A549 (cell line): ENCODE measurements at regions of chr17 and their contacts with region 1.

Region 1: GRCh38 chr17:75228305-75228704 is 22.8 kb downstream of the NUP85 start:
- DNase-seq: no peak
- ATAC-seq: no peak
- H3K4me3 ChIP-seq: no peak overlapping the region
- H3K27ac ChIP-seq: no peak overlapping the region
- H3K4me1 ChIP-seq: no peaks in the 10 kb centered on the region
- CTCF ChIP-seq: no peak
- EP300 ChIP-seq: no peak
- POLR2A ChIP-seq: no peak
- RAD21 ChIP-seq: no peak

Region 2: GRCh38 chr17:75181110-75181509 is 47.2 kb before region 1 on chr17:
- CTCF ChIA-PET with region 1: no interaction called
- POLR2A ChIA-PET with region 1: no interaction called
- DNase-seq: no peak
- ATAC-seq: no peak
- H3K4me3 ChIP-seq: peak overlapping the region; percentile 96
- H3K27ac ChIP-seq: peak overlapping the region; percentile 93 to 98; a peak in 3 of 6 replicates
- H3K4me1 ChIP-seq: peaks cover 15% of the 10 kb centered on the region; the same call in 2 of the 3 replicates
- CTCF ChIP-seq: no peak
- EP300 ChIP-seq: no peak
- POLR2A ChIP-seq: no peak
- RAD21 ChIP-seq: no peak

Region 3: GRCh38 chr17:75218131-75218530 is 10.2 kb before region 1 on chr17:
- CTCF ChIA-PET with region 1: interaction called, 19 read pairs
- POLR2A ChIA-PET with region 1: interaction called, 3 read pairs
- DNase-seq: no peak
- ATAC-seq: no peak
- H3K4me3 ChIP-seq: no peak overlapping the region
- H3K27ac ChIP-seq: no peak overlapping the region
- H3K4me1 ChIP-seq: no peaks in the 10 kb centered on the region
- CTCF ChIP-seq: no peak
- EP300 ChIP-seq: no peak
- POLR2A ChIP-seq: no peak
- RAD21 ChIP-seq: no peak

Region 4: GRCh38 chr17:75313941-75314551 is 85.7 kb after region 1 on chr17:
- CTCF ChIA-PET with region 1: no interaction called
- POLR2A ChIA-PET with region 1: no interaction called
- DNase-seq: no peak
- ATAC-seq: peak in 1 of 2 experiments; percentile 11; a peak in 1 of 6 replicates
- H3K4me3 ChIP-seq: no peak overlapping the region
- H3K27ac ChIP-seq: no peak overlapping the region
- H3K4me1 ChIP-seq: peaks cover 10% of the 10 kb centered on the region
- CTCF ChIP-seq: no peak
- EP300 ChIP-seq: no peak
- POLR2A ChIP-seq: no peak
- RAD21 ChIP-seq: no peak